Activated naive CD4-positive, alpha-beta T cell treated with anti-CD3 and anti-CD28 coated beads for 36 hours (primary cell): ENCODE measurements at regions of chr6 and their contacts with region 1.

Region 1: GRCh38 chr6:144343701-144344428 is 58.7 kb downstream of the UTRN start:
- DNase-seq: peak; percentile 63
- H3K4me3 Mint-ChIP-seq: peak overlapping the region; percentile 88
- H3K27ac Mint-ChIP-seq: peak overlapping the region; percentile 99
- H3K4me1 Mint-ChIP-seq: peaks cover 67% of the 10 kb centered on the region
- H3K27me3 Mint-ChIP-seq: no peaks in the 10 kb centered on the region

Region 2: DNA sequence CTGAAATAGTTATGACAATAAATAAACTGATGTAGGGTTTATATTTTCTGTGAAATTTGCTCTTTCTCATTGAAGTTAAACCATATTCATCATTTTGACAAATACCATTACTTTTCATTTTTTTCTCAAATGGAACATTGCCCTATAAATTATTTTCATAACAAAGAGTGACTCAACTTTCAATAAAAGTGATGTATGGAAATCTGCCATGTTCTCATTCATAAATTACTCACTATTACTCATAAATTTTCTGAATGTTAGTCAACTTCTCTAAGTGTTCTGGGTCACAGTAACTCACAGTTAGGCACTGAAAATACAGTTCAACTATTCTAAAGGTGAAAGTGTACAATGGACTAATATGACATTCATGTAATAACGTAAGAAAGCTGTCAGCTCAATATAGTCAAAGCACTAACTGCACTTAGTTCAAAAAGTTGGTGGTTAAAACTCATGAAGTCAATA is 212.6 kb before region 1 on chr6:
- CTCF ChIA-PET with region 1: no interaction called
- intact Hi-C with region 1: loop called (anchors 1 kb)
- DNase-seq: no peak
- H3K4me3 Mint-ChIP-seq: peak overlapping the region; percentile 57
- H3K27ac Mint-ChIP-seq: peak overlapping the region; percentile 92
- H3K4me1 Mint-ChIP-seq: peaks cover 52% of the 10 kb centered on the region
- H3K27me3 Mint-ChIP-seq: peaks cover 3% of the 10 kb centered on the region

Region 3: GRCh38 chr6:144248476-144249301 is 95.2 kb before region 1 on chr6:
- CTCF ChIA-PET with region 1: no interaction called
- intact Hi-C with region 1: loop called (anchors 1 kb)
- DNase-seq: peak; percentile 9
- H3K4me3 Mint-ChIP-seq: no peak overlapping the region
- H3K27ac Mint-ChIP-seq: peak overlapping the region; percentile 32
- H3K4me1 Mint-ChIP-seq: peaks cover 16% of the 10 kb centered on the region
- H3K27me3 Mint-ChIP-seq: peaks cover 4% of the 10 kb centered on the region

Region 4: DNA sequence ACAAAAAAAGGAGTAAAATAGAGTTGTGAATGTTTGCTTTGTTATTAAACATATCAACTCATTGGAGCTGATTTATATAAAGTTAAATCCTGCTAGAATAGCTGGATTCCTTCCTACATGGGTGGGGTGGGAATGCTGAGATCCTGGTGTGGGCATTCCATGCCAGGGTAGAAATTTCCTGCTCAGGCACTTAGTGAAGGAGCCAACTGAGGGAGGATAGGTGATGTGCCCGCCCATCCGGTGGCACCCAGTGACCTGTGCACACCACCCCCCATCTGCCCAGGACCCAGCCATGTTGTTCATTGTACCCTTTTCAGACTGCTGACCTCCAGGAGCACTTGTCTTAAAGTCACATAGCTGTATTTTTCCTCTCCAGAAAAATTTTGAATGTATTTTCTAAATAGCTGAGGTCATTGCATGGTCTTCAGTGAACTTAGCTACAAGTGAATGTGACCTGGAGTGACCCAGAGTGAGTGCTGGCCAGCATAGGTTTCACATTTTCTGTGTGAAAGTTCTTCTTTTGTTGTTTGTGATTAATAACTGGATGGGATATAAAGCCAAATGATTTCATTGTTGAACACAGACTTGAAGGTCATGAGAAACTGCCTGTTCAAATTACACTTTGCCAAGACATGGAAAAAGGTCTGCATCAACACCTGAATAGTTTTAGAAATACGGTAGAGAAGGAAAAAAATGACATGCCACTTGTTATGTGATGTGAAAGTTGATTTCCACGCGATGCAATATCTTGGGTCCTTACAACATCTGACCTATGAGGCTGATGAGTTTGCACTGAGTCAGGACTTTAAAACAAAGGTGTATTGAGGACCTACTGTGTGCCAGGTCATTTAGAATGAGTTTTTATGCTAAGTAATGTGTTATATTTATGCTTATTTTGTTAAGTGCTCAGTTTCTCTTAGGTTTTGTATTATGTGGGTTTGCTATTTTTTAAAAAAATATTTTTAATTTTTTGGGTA is 18.5 kb after region 1 on chr6:
- CTCF ChIA-PET with region 1: no interaction called
- intact Hi-C with region 1: no loop called
- DNase-seq: no peak
- H3K4me3 Mint-ChIP-seq: no peak overlapping the region
- H3K27ac Mint-ChIP-seq: peak overlapping the region; percentile 41
- H3K4me1 Mint-ChIP-seq: peaks cover 58% of the 10 kb centered on the region
- H3K27me3 Mint-ChIP-seq: no peaks in the 10 kb centered on the region

Region 5: DNA sequence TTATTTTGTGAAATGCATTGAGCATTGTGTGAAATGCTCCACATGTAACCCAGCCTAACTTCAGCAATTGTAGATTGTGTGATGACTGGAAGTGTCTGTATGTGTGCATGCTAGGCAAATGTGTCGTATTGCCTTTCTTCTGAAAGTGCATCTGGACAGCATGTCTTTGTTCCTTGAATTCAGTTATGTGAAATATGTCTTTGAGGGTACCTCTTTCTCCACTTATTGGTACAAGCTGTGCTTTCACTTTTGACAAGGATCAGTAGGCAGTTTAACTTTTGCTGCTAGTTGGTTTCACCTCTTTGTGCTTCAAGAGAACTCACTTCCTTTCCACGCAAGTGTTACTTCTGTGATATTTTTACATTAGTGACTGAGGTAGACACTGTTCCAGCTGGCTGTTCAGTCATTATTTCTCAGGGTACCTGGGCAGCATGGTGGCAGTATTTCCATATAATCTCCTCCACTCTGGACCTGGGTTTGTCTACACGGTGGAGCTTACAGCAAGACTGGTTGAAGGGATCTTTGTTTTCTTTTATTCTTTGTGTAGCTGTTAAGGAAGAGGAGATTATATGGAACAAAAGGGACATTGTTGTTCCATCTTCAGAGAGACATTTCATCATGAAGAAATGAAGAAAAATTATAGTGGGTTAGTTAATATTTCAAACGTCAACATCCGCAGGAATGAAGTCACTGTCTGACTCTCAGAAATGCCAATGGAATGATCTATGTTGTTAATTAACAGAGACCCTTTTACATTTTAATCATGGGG is 116.6 kb after region 1 on chr6:
- CTCF ChIA-PET with region 1: interaction called, 3 read pairs
- intact Hi-C with region 1: loop called (anchors 1 kb)
- DNase-seq: peak; percentile 37
- H3K4me3 Mint-ChIP-seq: no peak overlapping the region
- H3K27ac Mint-ChIP-seq: peak overlapping the region; percentile 20
- H3K4me1 Mint-ChIP-seq: peaks cover 16% of the 10 kb centered on the region
- H3K27me3 Mint-ChIP-seq: no peaks in the 10 kb centered on the region

Region 6: GRCh38 chr6:144559865-144560593 is 216.2 kb after region 1 on chr6:
- CTCF ChIA-PET with region 1: no interaction called
- intact Hi-C with region 1: loop called (anchors 2 kb)
- DNase-seq: peak; percentile 27
- H3K4me3 Mint-ChIP-seq: peak overlapping the region; percentile 45
- H3K27ac Mint-ChIP-seq: peak overlapping the region; percentile 28
- H3K4me1 Mint-ChIP-seq: peaks cover 19% of the 10 kb centered on the region
- H3K27me3 Mint-ChIP-seq: no peaks in the 10 kb centered on the region

Region 7: GRCh38 chr6:145814501-145815308 is 1470.8 kb after region 1 on chr6 and contains the start of gene FBXO30:
- CTCF ChIA-PET with region 1: no interaction called
- intact Hi-C with region 1: loop called (anchors 5 kb)
- DNase-seq: peak; percentile 81
- H3K4me3 Mint-ChIP-seq: peak within 1 kb of the TSS; percentile 89
- H3K27ac Mint-ChIP-seq: peak within 1 kb of the TSS; percentile 84
- H3K4me1 Mint-ChIP-seq: peaks cover 31% of the 10 kb centered on the region
- H3K27me3 Mint-ChIP-seq: no peaks in the 10 kb centered on the region
- total RNA-seq, gene FBXO30: 2.0 to 2.1 TPM